Gastrocnemius medialis (tissue), 4 donors: ENCODE measurements at regions of chr7 and their contacts with region 1.

Region 1: GRCh38 chr7:118183786-118184564 is at the start of gene LSM8:
- DNase-seq: peak; percentile 95 to 96
- ATAC-seq: peak; percentile 99
- H3K4me3 ChIP-seq: peak within 1 kb of the TSS; percentile 82 to 99 (median 94)
- H3K27ac ChIP-seq: peak within 1 kb of the TSS; percentile 88 to 94 (median 92)
- H3K4me1 ChIP-seq: peaks cover 19 to 29% of the 10 kb centered on the region in 2 donors
- H3K27me3 ChIP-seq: no peaks in the 10 kb centered on the region
- CTCF ChIP-seq: no peak
- POLR2A ChIP-seq: peak; percentile 71 to 82
- total RNA-seq, gene LSM8: 13.0 to 28.1 (median 17.7) TPM

Region 2: DNA sequence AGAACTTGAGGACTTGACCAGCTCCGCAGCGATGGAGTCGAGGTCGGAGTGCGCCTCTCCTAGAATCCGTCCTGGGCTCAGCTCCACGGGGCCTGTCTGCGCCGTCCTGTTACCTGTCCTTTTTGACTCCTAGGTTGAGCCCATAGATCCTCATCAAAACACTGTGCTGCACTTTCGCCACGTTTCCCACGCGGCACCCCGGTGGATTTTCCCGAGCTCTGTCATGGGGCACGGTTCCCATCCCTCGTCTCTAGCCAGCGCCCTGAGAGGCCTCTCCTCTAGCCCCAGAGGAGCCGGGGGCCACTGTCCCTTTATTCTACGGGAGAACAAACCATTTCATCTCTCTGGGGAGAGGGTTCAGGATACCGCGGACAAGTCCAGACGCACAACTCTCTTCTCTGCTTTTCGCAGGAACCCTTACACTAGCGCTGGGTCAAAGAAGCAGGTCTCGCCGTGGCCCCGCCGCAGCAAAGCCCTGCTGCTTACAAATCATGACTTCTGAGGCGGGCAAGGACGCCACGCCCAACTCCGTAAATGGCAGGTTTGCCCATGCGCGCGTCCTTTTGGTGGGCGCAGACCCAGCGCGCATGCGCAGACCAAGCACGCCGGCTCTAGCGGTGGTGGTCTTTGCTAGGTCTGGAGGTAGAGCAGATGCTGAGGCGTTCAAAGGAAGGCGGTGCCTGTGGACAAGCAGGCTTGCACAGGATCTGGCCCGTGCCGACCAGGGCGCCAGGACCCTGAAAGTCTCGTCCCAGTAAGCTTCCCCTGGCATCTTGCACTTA is 30.3 kb after region 1 on chr7:
- in situ Hi-C with region 1: no loop called
- intact Hi-C with region 1: loop called (anchors 1 kb)
- DNase-seq: peak; percentile 24 to 64
- ATAC-seq: peak; percentile 79 to 91
- H3K4me3 ChIP-seq: peak overlapping the region; percentile 48 to 75 (median 62)
- H3K27ac ChIP-seq: peak overlapping the region in 3 of 4 donors; percentile 32 to 62 (median 58)
- H3K4me1 ChIP-seq: no peaks in the 10 kb centered on the region
- H3K27me3 ChIP-seq: no peaks in the 10 kb centered on the region
- CTCF ChIP-seq: no peak
- POLR2A ChIP-seq: no peak